Naive thymus-derived CD4-positive, alpha-beta T cell (primary cell): ENCODE measurements at regions of chr1 and their contacts with region 1.

Region 1: DNA sequence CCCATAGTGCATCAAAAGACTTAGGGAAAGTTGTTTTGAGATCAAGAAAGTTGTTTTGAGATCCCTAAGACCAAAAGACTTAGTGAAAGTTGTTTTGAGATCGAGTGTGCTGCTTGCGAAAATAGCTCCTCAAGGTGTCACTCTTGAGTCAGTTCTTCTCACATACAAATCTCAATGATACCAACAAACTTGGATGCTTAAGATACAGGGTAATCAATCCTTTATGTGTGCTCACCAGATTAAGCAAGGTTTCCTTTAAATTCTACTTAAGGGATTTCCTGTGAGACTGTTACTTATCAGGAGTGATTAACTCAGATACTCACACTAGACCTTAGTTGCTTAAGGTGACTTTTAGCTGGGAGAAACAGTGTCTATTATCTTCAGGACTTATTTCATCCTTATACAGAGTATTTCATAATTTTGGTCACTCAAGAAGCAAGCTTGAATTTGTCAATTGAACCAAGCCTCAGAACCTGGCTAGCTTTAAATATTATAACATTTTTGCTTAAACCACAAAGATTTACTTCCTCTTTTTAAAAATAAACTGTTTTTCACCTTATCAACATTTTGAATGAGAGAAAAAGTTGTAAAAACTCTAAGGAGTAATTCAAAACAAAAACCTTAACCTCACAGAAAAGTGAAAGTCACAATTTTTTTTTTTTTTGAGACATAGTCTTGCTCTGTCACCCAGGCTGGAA is 8.0 kb upstream of the RLF start:
- DNase-seq: peak in 7 of 9 donors; percentile 26 to 68 (median 53)
- ATAC-seq: peak; percentile 88
- H3K4me3 ChIP-seq: no peak overlapping the region
- H3K4me3 Mint-ChIP-seq: peak overlapping the region in 7 of 10 donors; percentile 18 to 70 (median 52)
- H3K27ac ChIP-seq: no peak overlapping the region
- H3K27ac Mint-ChIP-seq: peak overlapping the region in 8 of 9 donors; percentile 16 to 88 (median 76)
- H3K4me1 ChIP-seq: no peaks in the 10 kb centered on the region
- H3K4me1 Mint-ChIP-seq: peaks cover 0 to 12% (median 10%) of the 10 kb centered on the region in 7 donors
- H3K27me3 ChIP-seq: no peaks in the 10 kb centered on the region
- H3K27me3 Mint-ChIP-seq: peaks cover 0 to 25% (median 0%) of the 10 kb centered on the region in 5 donors

Region 2: GRCh38 chr1:40392221-40392620 is 239.0 kb after region 1 on chr1:
- CTCF ChIA-PET with region 1: interaction called, 11 read pairs
- POLR2A ChIA-PET with region 1: interaction called, 5 read pairs
- intact Hi-C with region 1: no loop called
- DNase-seq: no peak
- ATAC-seq: no peak
- H3K4me3 ChIP-seq: peak overlapping the region; percentile 4
- H3K4me3 Mint-ChIP-seq: peak overlapping the region; percentile 7 to 94 (median 81)
- H3K27ac ChIP-seq: peak overlapping the region; percentile 99
- H3K27ac Mint-ChIP-seq: peak overlapping the region; percentile 73 to 100 (median 98)
- H3K4me1 ChIP-seq: peaks cover 88 to 91% of the 10 kb centered on the region in 2 donors
- H3K4me1 Mint-ChIP-seq: peaks cover 57 to 94% (median 88%) of the 10 kb centered on the region in 7 donors
- H3K27me3 ChIP-seq: no peaks in the 10 kb centered on the region
- H3K27me3 Mint-ChIP-seq: no peaks in the 10 kb centered on the region

Region 3: GRCh38 chr1:40411294-40411693 is 258.1 kb after region 1 on chr1:
- CTCF ChIA-PET with region 1: interaction called, 10 read pairs
- POLR2A ChIA-PET with region 1: no interaction called
- intact Hi-C with region 1: no loop called
- DNase-seq: no peak
- ATAC-seq: no peak
- H3K4me3 ChIP-seq: no peak overlapping the region
- H3K4me3 Mint-ChIP-seq: no peak overlapping the region
- H3K27ac ChIP-seq: no peak overlapping the region
- H3K27ac Mint-ChIP-seq: peak overlapping the region in 2 of 9 donors; percentile 24 to 32
- H3K4me1 ChIP-seq: peaks cover 6 to 10% of the 10 kb centered on the region in 2 donors
- H3K4me1 Mint-ChIP-seq: peaks cover 22 to 71% (median 54%) of the 10 kb centered on the region in 7 donors
- H3K27me3 ChIP-seq: no peaks in the 10 kb centered on the region
- H3K27me3 Mint-ChIP-seq: no peaks in the 10 kb centered on the region

Region 4: DNA sequence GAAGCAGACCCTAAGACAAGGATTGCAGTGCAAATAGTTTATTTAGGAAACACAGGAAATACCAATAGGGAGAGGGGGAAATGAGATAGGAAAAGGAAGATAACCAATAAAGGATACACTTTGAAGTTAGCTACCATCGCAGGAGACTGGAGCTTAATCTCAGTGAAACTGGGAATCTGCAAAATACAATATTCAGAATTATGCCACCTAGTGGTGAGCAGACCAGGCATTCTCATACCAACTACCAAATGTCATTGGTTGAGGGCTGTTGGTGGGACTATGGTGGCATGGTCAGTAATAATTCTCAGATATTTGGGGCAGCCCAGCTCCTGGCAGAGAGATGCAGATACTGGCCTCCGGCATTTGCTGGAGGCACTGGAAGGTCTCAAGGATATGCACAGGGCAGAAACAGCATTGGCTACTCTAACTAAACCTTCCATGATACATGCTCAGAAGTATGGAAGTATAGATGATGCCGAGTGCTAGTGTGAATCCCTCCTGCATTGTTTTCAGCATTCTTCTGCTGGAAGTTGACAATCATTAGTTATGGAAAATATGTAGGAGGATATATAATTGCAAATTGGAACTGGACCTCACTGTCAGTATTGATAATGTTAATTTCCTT is 285.3 kb after region 1 on chr1:
- CTCF ChIA-PET with region 1: interaction called, 15 read pairs
- POLR2A ChIA-PET with region 1: interaction called, 3 read pairs
- intact Hi-C with region 1: loop called in 1 of 2 experiments (anchors 1 kb)
- DNase-seq: peak in 5 of 9 donors; percentile 17 to 41 (median 31)
- ATAC-seq: peak; percentile 72
- H3K4me3 ChIP-seq: no peak overlapping the region
- H3K4me3 Mint-ChIP-seq: no peak overlapping the region
- H3K27ac ChIP-seq: no peak overlapping the region
- H3K27ac Mint-ChIP-seq: no peak overlapping the region
- H3K4me1 ChIP-seq: no peaks in the 10 kb centered on the region
- H3K4me1 Mint-ChIP-seq: peaks cover 0 to 5% (median 0%) of the 10 kb centered on the region in 7 donors
- H3K27me3 ChIP-seq: no peaks in the 10 kb centered on the region
- H3K27me3 Mint-ChIP-seq: no peaks in the 10 kb centered on the region